Motor neuron (in vitro differentiated cells): ENCODE measurements at regions of chr3 and their contacts with region 1.

Region 1: DNA sequence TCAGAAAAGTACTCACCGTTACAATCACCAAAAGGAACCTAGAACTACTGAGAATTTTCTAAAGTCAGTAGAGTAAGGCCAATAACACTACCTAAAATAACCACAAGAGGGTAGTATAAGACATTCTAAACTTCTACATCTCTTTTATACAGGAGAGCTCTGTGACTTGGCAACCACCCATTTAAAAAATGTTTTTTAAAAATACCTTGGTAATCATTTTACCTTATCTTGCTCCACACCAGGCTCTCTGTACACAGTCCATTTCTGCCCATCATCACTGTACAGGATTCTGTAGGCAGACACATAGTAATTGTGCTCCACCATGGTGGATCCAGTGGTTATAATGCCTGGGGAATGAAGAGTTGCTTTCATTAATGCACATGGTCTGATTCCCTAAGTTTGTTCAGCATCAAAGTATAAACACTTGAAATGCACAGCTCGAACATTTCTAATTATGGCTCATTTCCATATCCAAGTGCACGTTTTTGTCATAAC is 54.5 kb downstream of the ST3GAL6 start:
- ATAC-seq: peak; percentile 55 to 84 (median 69)
- H3K4me3 ChIP-seq: no peak overlapping the region
- H3K27ac ChIP-seq: no peak overlapping the region
- H3K4me1 ChIP-seq: no peaks in the 10 kb centered on the region

Region 2: DNA sequence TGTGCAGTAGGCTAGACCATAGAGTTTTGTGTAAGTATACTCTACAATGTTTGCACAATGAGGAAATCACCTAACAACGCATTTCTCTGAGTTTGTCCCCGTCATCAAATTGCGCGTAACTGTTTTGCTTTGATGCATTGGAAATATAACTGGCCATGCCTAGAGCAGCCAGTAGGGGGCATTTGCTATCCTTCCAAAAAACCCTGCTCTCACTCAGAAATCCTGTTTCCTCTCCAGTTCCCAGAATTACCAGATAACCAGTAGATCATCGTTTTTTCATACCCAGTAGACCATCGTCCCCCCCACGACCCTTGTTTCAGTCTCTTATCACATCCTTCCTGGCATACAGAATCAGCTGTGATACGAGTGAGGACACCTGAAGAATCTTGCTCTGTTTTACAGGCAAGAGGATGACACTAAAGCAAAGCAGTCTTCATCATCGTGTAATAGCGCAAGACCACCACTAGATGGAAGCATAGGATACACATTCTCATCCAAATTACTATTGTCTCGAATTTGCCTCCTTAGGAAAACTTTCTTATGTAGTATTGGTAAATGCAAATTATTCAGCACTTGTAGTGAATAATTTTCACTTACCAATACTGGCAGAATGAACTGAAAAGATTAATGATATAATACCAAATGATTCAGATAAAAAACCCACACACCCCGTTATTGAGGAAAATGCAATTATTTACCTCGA is 778.1 kb before region 1 on chr3:
- in situ Hi-C with region 1: loop called in 2 of 9 experiments (anchors 10 to 25 kb)
- ATAC-seq: peak; percentile 76 to 97 (median 91)
- H3K4me3 ChIP-seq: peak overlapping the region; percentile 28 to 52 (median 48)
- H3K27ac ChIP-seq: no peak overlapping the region
- H3K4me1 ChIP-seq: no peaks in the 10 kb centered on the region

Region 3: DNA sequence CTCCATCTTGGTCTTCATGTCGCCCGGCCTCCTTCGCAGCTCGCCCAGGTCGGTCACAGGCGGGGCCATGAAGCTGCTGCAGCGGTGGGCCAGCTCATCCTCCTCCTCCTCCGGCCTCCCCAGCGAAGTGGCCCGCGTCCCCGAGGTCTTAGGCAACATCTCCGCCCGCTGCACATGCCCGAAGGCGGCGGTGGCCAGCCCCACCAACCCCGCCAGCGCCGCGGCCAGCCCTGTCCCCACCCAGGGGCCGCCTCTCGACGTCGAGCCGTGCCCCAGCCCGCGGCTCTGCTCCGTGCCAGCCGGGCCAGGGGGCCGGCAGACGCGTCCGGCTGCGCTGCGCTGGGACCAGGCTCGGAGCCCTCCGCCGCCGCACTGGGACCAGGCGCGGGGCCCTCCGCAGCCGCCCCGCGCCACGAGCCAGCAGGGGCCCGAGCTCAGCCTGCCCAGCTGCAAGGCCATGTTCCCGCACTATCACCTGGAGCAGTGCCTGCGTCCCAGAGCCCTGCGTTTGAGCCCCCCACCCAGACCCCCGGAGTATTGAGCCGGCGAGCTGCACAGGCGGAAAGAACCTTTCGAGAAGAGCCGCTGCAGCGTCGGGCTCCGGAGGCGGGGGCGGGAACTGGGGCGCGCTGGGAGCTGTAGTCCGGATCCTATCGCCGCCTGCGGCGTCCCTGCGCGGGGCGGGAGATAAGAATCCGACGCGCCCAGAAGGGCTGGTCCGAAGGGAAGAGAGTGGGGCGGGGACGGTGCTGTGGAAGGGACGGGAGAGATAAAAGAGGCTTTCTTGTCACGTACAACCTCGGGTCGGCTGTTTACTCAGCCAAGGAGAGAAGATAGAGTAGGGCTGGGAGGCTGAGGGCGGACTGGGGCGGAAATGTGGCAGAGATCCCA is 224.3 kb before region 1 on chr3 and contains the start of gene CPOX:
- in situ Hi-C with region 1: loop called in 1 of 9 experiments (anchors 25 kb)
- ATAC-seq: peak; percentile 94 to 98 (median 97)
- H3K4me3 ChIP-seq: peak within 1 kb of the TSS; percentile 56 to 92 (median 69)
- H3K27ac ChIP-seq: no peak within 1 kb of the TSS
- H3K4me1 ChIP-seq: no peaks in the 10 kb centered on the region
- total RNA-seq, gene CPOX: 7.8 to 17.1 (median 11.3) TPM

Region 4: GRCh38 chr3:98602078-98602678 is 215.4 kb before region 1 on chr3:
- in situ Hi-C with region 1: loop called in 6 of 9 experiments (anchors 5 to 25 kb)
- ATAC-seq: peak; percentile 61 to 86 (median 76)
- H3K4me3 ChIP-seq: no peak overlapping the region
- H3K27ac ChIP-seq: no peak overlapping the region
- H3K4me1 ChIP-seq: no peaks in the 10 kb centered on the region

Region 5: GRCh38 chr3:98994128-98994762 is 176.7 kb after region 1 on chr3:
- in situ Hi-C with region 1: loop called (anchors 5 to 25 kb)
- ATAC-seq: peak in 7 of 8 experiments; percentile 43 to 54 (median 49)
- H3K4me3 ChIP-seq: no peak overlapping the region
- H3K27ac ChIP-seq: no peak overlapping the region
- H3K4me1 ChIP-seq: no peaks in the 10 kb centered on the region

Region 6: GRCh38 chr3:99753268-99753975 is 935.8 kb after region 1 on chr3:
- in situ Hi-C with region 1: loop called in 2 of 9 experiments (anchors 10 to 25 kb)
- ATAC-seq: peak; percentile 76 to 92 (median 80)
- H3K4me3 ChIP-seq: no peak overlapping the region
- H3K27ac ChIP-seq: no peak overlapping the region
- H3K4me1 ChIP-seq: no peaks in the 10 kb centered on the region